ENCODE measurements at regions of chr1 and their contacts with region 1.

Region 1: GRCh38 chr1:244835276-244836134 is at the start of gene COX20:
- DNase-seq: peak; percentile 93 to 97 (median 97)
- H3K4me3 ChIP-seq: peak within 1 kb of the TSS; percentile 50 to 98 (median 89)
- H3K27ac ChIP-seq: peak within 1 kb of the TSS; percentile 97 to 98
- H3K4me1 ChIP-seq: peaks cover 21 to 44% (median 29%) of the 10 kb centered on the region in 4 experiments
- H3K27me3 ChIP-seq: no peaks in the 10 kb centered on the region

Region 2: GRCh38 chr1:244854865-244855578 is 19.5 kb after region 1 on chr1:
- CTCF ChIA-PET with region 1: interaction called, 32 read pairs
- POLR2A ChIA-PET with region 1: interaction called, 42 read pairs
- DNase-seq: peak in 2 of 3 donors; percentile 37 to 44
- H3K4me3 ChIP-seq: peak overlapping the region in 2 of 7 experiments; percentile 56 to 57
- H3K27ac ChIP-seq: peak overlapping the region in 1 of 2 experiments; percentile 51
- H3K4me1 ChIP-seq: peaks cover 43 to 80% (median 59%) of the 10 kb centered on the region in 4 experiments
- H3K27me3 ChIP-seq: no peaks in the 10 kb centered on the region

Region 3: DNA sequence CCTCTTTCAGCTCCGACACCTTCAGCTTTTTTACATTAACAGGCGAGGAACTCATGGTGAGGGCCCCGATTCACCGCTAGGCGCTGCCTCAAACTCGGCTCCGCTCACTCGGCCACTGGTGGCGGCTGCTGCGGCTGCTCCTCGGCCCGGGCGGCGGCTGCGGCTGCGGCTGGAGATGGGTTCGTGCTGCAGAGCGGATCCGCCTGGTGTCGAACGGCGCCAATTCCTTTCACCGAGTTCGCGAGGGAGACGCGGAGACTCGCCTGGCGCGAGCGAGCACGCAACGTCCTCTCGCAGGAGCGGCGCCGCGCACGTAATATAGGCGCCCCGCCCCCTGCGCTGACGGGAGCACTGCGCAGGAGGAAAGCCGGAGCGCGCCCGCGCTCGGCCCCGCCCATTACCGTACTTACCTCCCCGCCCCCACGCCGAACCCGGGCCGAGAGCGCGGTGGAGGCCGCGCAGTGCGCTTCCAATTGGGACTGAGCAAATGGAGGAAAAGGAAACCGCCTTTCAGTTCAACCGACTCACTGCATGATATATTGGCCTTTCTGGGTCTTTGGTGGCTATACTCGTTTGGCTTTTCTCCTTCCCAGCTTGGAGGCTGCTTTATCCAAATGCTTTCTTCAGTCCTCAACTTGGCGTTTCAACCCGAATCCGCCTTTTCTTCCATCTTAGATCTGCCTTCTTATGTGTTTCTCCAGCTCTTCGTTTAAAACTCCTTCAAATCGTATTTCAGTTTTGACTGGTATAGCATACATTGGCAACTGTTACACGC is 28.9 kb after region 1 on chr1 and contains the start of gene HNRNPU:
- CTCF ChIA-PET with region 1: interaction called, 36 read pairs
- POLR2A ChIA-PET with region 1: interaction called, 44 read pairs
- DNase-seq: peak; percentile 97 to 98 (median 98)
- H3K4me3 ChIP-seq: peak within 1 kb of the TSS; percentile 97 to 100 (median 99)
- H3K27ac ChIP-seq: peak within 1 kb of the TSS; percentile 97 to 99
- H3K4me1 ChIP-seq: peaks cover 25 to 56% (median 39%) of the 10 kb centered on the region in 4 experiments
- H3K27me3 ChIP-seq: no peaks in the 10 kb centered on the region

Region 4: DNA sequence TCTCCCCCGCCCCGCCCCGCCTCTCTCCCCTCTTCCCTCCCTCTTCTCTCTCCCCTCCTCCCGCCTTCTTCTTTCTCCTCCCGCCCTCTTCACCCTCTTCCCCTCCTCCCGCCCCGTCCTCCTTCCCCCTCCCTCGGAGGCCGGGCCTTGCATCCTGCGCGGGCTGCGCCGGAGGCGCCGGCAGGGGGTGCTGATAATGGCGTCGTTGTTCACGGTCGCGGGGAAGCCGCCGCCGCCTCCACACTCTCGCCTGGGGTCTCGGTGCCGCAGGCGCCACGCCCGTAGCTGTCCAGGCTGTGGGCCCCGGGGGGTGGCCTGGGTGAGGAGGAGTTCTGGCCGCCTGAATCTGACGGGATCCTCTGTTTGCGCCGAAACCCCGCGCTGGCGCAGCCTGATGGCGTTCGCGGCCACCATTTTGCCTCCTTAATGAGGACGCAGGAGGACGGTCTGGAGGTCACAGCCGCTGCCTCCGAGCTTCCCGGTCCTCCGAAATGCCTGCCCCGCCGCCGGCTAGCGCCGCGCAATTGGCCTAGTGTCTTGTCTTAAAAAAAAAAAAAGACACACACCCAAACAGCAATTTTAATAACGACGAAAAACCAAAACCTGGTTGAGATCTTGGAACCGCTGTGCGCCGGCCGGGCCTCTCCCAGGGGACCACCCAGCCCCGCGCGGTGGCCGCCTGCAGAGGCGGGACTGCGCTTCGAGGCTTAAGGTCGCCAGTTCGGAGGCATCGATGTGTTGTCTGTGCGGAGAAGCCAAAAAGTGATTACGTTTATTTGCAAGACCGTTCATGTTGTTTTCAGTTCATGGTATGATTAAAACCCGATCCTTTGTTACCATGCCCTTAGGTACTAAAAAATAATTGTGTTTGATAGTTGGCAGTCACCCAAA is 135.4 kb after region 1 on chr1:
- CTCF ChIA-PET with region 1: interaction called, 5 read pairs
- POLR2A ChIA-PET with region 1: interaction called, 28 read pairs
- DNase-seq: peak; percentile 96 to 98 (median 97)
- H3K4me3 ChIP-seq: peak overlapping the region; percentile 49 to 92 (median 80)
- H3K27ac ChIP-seq: peak overlapping the region; percentile 100
- H3K4me1 ChIP-seq: peaks cover 6 to 30% (median 18%) of the 10 kb centered on the region in 4 experiments
- H3K27me3 ChIP-seq: no peaks in the 10 kb centered on the region